Posterior vena cava (tissue), 2 donors: ENCODE measurements at regions of chr2 and their contacts with region 1.

Region 1: DNA sequence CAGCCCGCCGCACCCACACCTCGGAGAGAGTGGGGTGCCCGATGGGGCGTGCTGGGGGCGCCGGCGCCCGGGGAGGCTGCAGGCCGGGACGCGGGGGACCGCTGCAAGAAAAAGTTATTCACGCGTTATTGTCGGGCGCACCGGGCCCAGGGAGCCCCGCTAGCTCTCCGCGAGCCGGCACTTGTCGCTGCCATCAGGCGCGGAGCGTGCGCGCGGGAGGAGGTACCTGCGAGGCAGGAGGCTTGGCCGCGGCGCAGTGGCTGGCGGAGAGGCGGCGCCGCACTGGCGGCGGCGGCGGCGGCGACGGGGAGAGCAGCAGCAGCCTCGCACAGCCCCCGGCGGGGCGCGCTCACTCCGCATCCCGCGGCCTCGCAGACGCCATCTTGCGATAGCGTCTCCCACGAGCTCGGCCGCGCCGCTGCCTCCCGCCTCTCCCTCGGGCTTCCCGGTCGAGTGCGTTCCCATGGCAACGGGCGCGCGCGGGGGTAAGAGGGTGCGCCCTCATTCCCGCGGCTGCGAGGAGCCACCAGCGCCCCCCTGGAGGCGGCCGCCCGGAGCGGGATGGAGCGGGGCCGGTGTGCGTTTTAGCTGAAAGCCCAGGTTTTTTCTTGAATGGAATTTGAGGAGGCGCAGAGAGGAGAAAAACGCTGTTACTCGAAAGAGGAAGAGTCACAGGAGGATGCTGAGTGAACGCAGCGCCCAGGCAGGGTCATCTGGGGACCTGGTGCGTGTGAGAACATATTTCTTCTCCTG is at the start of gene CHN1:
- DNase-seq: peak; percentile 90
- total RNA-seq, gene CHN1: 9.8 to 16.6 TPM

Region 2: GRCh38 chr2:173458991-173459780 is 1546.0 kb before region 1 on chr2:
- intact Hi-C with region 1: loop called in 1 of 2 experiments (anchors 5 kb)
- DNase-seq: no peak

Region 3: GRCh38 chr2:175036582-175037018 is 31.4 kb after region 1 on chr2:
- intact Hi-C with region 1: loop called in 1 of 2 experiments (anchors 1 kb)
- DNase-seq: no peak